ENCODE measurements at regions of chr17 and their contacts with region 1.

Region 1: GRCh38 chr17:59004338-59005111 is 102.2 kb downstream of the TRIM37 start:
- DNase-seq: peak; percentile 49 to 69 (median 58)
- H3K4me3 ChIP-seq: no peak overlapping the region
- H3K4me3 Mint-ChIP-seq: peak overlapping the region in 1 of 2 donors; percentile 48
- H3K27ac ChIP-seq: no peak overlapping the region
- H3K27ac Mint-ChIP-seq: peak overlapping the region in 4 of 7 donors; percentile 27 to 80 (median 68)
- H3K4me1 ChIP-seq: peaks cover 30 to 41% of the 10 kb centered on the region in 2 donors
- H3K4me1 Mint-ChIP-seq: peaks cover 32% of the 10 kb centered on the region
- H3K27me3 ChIP-seq: no peaks in the 10 kb centered on the region
- H3K27me3 Mint-ChIP-seq: no peaks in the 10 kb centered on the region
- CTCF ChIP-seq: peak; percentile 95

Region 2: GRCh38 chr17:58587702-58588254 is 416.7 kb before region 1 on chr17:
- intact Hi-C with region 1: loop called (anchors 5 kb)
- DNase-seq: peak; percentile 41 to 61 (median 55)
- H3K4me3 ChIP-seq: no peak overlapping the region
- H3K4me3 Mint-ChIP-seq: peak overlapping the region in 1 of 2 donors; percentile 42
- H3K27ac ChIP-seq: no peak overlapping the region
- H3K27ac Mint-ChIP-seq: no peak overlapping the region
- H3K4me1 ChIP-seq: no peaks in the 10 kb centered on the region
- H3K4me1 Mint-ChIP-seq: no peaks in the 10 kb centered on the region
- H3K27me3 ChIP-seq: no peaks in the 10 kb centered on the region
- H3K27me3 Mint-ChIP-seq: peaks cover 2 to 8% (median 5%) of the 10 kb centered on the region in 3 donors
- CTCF ChIP-seq: peak; percentile 97

Region 3: DNA sequence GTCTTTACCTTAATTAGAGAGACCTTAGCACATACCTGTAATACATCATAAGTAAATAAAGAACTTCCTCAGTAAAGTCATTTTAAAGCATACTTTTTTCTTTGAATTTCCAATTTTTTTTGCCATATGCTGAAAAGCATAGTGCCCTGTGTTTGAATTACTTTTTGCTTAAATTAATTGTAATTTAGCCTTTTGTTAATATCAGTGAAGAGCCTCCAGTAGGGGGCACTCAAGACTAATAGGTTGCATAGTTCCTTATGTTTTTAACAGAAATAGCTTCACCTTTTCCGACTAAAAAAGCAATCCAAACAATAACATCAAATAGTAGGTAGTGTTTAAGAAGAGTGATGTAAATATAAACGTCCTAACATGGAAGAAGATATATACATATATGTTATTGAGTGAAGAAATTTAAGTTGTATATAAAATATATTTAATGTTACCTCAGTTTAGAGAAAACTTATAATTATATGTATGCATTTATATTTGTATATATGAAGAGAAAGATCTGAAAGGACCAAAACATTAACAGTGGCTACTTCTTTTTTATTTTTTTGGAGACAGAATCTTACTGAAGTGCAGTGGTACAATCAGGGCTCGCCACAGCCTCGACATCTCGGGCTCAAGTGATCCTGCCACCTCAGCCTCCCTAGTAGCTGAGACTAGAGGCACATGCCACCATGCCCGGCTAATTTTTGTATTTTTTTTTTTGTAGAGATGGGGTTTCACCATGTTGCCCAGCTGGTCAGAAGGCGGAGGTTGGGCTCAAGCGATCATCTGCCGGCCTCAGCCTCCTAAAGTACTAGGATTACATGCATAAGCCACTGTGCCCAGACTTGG is 293.4 kb before region 1 on chr17:
- intact Hi-C with region 1: loop called (anchors 1 to 2 kb)
- DNase-seq: peak; percentile 35 to 73 (median 53)
- H3K4me3 ChIP-seq: no peak overlapping the region
- H3K4me3 Mint-ChIP-seq: no peak overlapping the region
- H3K27ac ChIP-seq: peak overlapping the region in 1 of 2 donors; percentile 23
- H3K27ac Mint-ChIP-seq: no peak overlapping the region
- H3K4me1 ChIP-seq: no peaks in the 10 kb centered on the region
- H3K4me1 Mint-ChIP-seq: peaks cover 5% of the 10 kb centered on the region
- H3K27me3 ChIP-seq: no peaks in the 10 kb centered on the region
- H3K27me3 Mint-ChIP-seq: no peaks in the 10 kb centered on the region
- CTCF ChIP-seq: peak; percentile 93